Vagina (tissue), 2 donors: ENCODE measurements at regions of chr5 and their contacts with region 1.

Region 1: DNA sequence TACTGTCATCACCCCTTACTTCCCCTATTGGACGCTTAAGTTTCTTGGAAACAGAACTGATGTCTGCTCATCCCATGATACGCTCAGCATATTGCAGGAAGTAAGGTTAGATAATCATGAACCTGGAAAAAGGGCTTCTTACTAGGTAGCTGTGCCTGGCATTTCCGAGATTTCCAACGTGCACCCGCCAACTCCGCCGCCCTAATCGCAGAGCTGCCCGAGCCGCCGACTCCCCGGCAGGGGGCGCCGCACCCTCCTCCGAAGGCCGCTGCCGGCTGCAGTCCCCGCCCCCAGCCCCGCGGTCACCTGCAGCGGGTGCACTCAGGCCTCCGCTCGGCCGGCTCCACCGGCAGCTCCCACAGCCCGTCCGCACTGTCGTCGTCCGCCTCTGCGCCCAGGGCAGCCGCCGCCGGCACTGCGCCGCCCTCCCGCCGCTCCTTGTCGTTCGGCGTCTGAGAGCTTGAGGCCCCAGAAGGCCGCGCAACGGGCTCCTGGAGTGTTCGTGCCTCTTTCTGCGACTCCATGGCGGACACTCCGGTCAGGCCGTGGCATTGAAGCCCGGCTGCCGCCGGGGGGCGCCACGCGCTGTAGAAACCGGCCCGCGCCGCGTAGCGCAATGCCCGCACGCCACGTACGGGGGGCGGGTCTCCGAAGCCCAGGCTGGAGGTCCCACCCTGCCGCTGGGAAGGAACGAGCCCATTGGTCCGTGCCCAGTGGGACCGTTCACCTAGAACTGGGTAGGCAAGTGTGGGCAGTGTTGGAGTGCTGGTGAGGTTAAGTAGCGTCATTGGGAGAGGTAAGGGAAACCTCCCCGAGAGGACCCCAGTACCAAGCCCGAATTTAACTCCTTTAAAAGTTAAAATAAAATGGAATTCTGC is at the start of gene DTWD2:
- DNase-seq: peak in 1 of 2 donors; percentile 89
- H3K4me3 ChIP-seq: peak within 1 kb of the TSS; percentile 60 to 89
- H3K27ac ChIP-seq: peak within 1 kb of the TSS; percentile 85
- H3K4me1 ChIP-seq: peaks cover 10% of the 10 kb centered on the region
- H3K27me3 ChIP-seq: no peaks in the 10 kb centered on the region
- CTCF ChIP-seq: peak; percentile 39 to 95 (median 84)
- POLR2A ChIP-seq: peak in 1 of 2 donors; percentile 4
- total RNA-seq, gene DTWD2: 7.9 TPM

Region 2: DNA sequence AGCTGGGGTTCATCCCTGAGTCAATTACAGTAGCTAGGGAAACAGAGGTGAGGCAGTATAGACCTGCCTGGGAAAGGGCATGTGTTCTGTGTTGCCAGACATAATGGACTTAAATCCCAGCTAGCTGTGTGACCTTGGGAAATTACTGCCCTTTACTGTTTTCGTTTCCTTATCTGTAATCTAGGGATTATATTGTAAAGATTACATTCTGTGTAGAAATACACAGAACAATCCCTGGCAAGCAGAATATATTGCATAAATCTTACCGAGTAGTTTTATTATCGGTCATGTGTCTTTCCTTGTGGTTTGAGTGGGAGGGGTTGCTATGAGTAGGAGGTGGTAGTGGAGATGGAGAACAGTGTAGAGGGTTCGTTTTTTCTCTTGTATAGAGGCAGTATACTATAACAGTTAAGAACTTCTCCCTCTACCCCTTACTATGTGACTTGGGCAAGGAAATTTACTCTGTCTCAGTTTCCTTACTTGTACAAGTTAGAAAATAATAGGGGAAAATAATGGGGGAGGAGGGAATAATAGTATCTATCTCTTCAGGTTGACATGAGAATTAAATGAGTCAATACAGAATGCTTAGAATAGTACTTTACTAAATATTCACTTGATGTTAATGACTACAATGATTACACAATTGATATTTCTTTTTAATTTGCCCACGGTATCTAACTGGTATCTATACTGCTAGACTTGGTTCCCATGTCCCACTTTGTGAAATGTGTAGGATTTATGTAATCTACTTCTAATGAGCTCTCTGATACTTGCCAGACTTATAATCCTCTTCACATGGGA is 75.6 kb after region 1 on chr5:
- intact Hi-C with region 1: no loop called
- DNase-seq: no peak
- H3K4me3 ChIP-seq: no peak overlapping the region
- H3K27ac ChIP-seq: no peak overlapping the region
- H3K4me1 ChIP-seq: peaks cover 5% of the 10 kb centered on the region
- H3K27me3 ChIP-seq: no peaks in the 10 kb centered on the region
- CTCF ChIP-seq: no peak
- POLR2A ChIP-seq: no peak

Region 3: DNA sequence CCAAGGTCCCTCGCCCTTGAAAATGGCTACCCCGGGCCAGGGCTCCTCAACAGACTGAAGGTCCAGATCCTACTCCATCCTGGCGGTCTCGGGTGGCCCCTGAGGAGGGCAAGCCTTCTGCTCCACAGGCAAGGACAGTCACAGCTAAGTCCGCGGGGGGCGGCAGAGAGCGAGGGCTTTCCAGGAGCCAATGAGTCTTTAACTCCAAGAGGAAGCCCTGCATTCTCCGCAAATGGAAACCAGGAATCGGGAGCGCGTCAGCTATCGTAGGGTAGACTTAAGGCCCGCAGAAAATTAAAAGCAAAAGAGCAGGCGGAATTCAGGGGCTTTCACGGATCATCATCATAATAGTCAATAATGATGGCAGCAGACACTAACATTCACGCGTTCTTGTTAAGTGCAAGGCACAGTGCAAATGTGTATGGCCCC is 279.7 kb after region 1 on chr5:
- intact Hi-C with region 1: loop called (anchors 5 kb)
- DNase-seq: peak in 1 of 2 donors; percentile 96
- H3K4me3 ChIP-seq: peak overlapping the region; percentile 87 to 90
- H3K27ac ChIP-seq: peak overlapping the region; percentile 91
- H3K4me1 ChIP-seq: peaks cover 35% of the 10 kb centered on the region
- H3K27me3 ChIP-seq: no peaks in the 10 kb centered on the region
- CTCF ChIP-seq: peak in 1 of 3 experiments; percentile 35
- POLR2A ChIP-seq: no peak

Region 4: DNA sequence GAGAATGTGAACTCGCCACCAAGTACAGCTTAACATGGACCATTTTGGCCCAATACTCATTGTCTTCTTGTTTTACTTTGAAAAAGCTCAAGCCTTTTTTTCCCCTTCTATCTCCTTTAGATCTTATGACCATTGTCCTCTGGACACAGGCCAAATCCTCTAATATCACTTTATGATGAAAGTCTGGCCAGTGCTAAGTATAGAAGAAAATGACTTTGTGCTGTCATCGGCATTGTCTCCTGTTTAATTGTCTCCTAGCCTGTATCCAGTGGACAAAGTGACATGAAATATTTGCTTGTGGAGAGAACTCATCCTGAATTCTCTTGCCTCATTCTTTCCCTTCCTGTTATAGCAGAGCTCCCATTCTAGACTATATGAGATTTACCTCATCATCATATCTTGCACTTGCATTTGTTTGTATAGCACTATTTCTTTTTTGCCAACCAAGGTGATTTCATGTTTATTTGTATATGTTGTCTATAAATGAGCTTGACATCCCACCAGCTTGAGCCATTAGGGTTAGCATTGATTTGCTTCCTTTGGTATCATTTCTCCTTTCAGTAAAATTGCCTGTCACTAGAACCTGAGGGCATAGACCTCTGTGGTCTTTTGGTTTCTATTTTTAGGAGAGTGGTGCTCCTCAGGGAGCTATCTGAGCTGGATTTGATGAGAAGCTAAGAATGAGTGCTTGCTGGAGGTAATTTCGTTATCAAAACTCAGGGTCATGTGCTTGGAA is 348.8 kb after region 1 on chr5:
- intact Hi-C with region 1: loop called (anchors 5 kb)
- DNase-seq: no peak
- H3K4me3 ChIP-seq: no peak overlapping the region
- H3K27ac ChIP-seq: no peak overlapping the region
- H3K4me1 ChIP-seq: peaks cover 43% of the 10 kb centered on the region
- H3K27me3 ChIP-seq: no peaks in the 10 kb centered on the region
- CTCF ChIP-seq: no peak
- POLR2A ChIP-seq: no peak

Region 5: GRCh38 chr5:119411935-119412602 is 423.8 kb after region 1 on chr5:
- intact Hi-C with region 1: loop called (anchors 5 kb)
- DNase-seq: no peak
- H3K4me3 ChIP-seq: peak overlapping the region; percentile 40 to 43
- H3K27ac ChIP-seq: peak overlapping the region; percentile 78
- H3K4me1 ChIP-seq: peaks cover 15% of the 10 kb centered on the region
- H3K27me3 ChIP-seq: no peaks in the 10 kb centered on the region
- CTCF ChIP-seq: peak; percentile 95 to 97 (median 96)
- POLR2A ChIP-seq: no peak